ENCODE measurements at regions of chr1 and their contacts with region 1.

Region 1: GRCh38 chr1:45583264-45583665 is 576 bp upstream of the NASP start:
- DNase-seq: peak; percentile 89 to 98
- ATAC-seq: peak; percentile 79 to 91 (median 79)
- H3K4me3 ChIP-seq: peak overlapping the region; percentile 97
- H3K4me3 Mint-ChIP-seq: peak overlapping the region; percentile 99
- H3K27ac ChIP-seq: peak overlapping the region; percentile 91
- H3K27ac Mint-ChIP-seq: peak overlapping the region; percentile 92 to 99
- H3K4me1 ChIP-seq: peaks cover 27% of the 10 kb centered on the region
- H3K4me1 Mint-ChIP-seq: peaks cover 35 to 38% of the 10 kb centered on the region in 2 donors
- H3K27me3 ChIP-seq: no peaks in the 10 kb centered on the region
- H3K27me3 Mint-ChIP-seq: no peaks in the 10 kb centered on the region
- CTCF ChIP-seq: no peak

Region 2: GRCh38 chr1:45339789-45340570 is 243.3 kb before region 1 on chr1 and contains the starts of genes MUTYH and TOE1:
- intact Hi-C with region 1: loop called (anchors 5 kb)
- DNase-seq: peak; percentile 81 to 93
- ATAC-seq: peak; percentile 82 to 92 (median 85)
- H3K4me3 ChIP-seq: peak within 1 kb of the TSS; percentile 95
- H3K4me3 Mint-ChIP-seq: peak within 1 kb of the TSS; percentile 99
- H3K27ac ChIP-seq: peak within 1 kb of the TSS; percentile 99
- H3K27ac Mint-ChIP-seq: peak within 1 kb of the TSS; percentile 94 to 96
- H3K4me1 ChIP-seq: peaks cover 27% of the 10 kb centered on the region
- H3K4me1 Mint-ChIP-seq: peaks cover 48 to 49% of the 10 kb centered on the region in 2 donors
- H3K27me3 ChIP-seq: no peaks in the 10 kb centered on the region
- H3K27me3 Mint-ChIP-seq: no peaks in the 10 kb centered on the region
- CTCF ChIP-seq: no peak
- total RNA-seq, gene MUTYH: 44.0 to 55.6 (median 51.5) TPM
- total RNA-seq, gene TOE1: 23.2 to 36.8 (median 28.2) TPM

Region 3: DNA sequence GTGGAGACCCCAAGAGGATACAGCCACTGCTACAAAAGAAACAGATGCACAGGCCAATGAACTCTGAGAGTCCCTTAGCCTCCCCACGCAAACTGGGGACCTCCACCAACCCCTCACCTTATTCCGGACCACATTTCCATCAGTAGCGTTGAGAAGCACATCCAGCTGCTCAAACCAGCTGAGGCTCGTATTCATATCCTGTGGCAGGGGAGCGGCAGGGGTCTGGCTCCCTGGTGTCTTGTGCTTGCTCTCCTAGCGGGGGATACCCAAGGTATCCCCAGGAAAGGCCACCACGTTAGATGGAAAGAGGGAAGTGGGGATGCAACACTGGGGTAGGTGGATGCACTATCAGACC is 83.9 kb before region 1 on chr1:
- intact Hi-C with region 1: loop called (anchors 1 kb)
- DNase-seq: no peak
- ATAC-seq: no peak
- H3K4me3 ChIP-seq: peak overlapping the region; percentile 58
- H3K4me3 Mint-ChIP-seq: peak overlapping the region; percentile 94
- H3K27ac ChIP-seq: peak overlapping the region; percentile 46
- H3K27ac Mint-ChIP-seq: peak overlapping the region; percentile 83 to 90
- H3K4me1 ChIP-seq: peaks cover 17% of the 10 kb centered on the region
- H3K4me1 Mint-ChIP-seq: peaks cover 26 to 28% of the 10 kb centered on the region in 2 donors
- H3K27me3 ChIP-seq: no peaks in the 10 kb centered on the region
- H3K27me3 Mint-ChIP-seq: no peaks in the 10 kb centered on the region
- CTCF ChIP-seq: no peak

Region 4: GRCh38 chr1:45550401-45551351 is 32.6 kb before region 1 on chr1 and contains the start of gene AKR1A1:
- intact Hi-C with region 1: loop called (anchors 2 kb)
- DNase-seq: peak; percentile 84 to 94
- ATAC-seq: peak; percentile 93 to 97 (median 94)
- H3K4me3 ChIP-seq: peak within 1 kb of the TSS; percentile 71
- H3K4me3 Mint-ChIP-seq: peak within 1 kb of the TSS; percentile 96
- H3K27ac ChIP-seq: peak within 1 kb of the TSS; percentile 83
- H3K27ac Mint-ChIP-seq: peak within 1 kb of the TSS; percentile 91 to 94
- H3K4me1 ChIP-seq: peaks cover 14% of the 10 kb centered on the region
- H3K4me1 Mint-ChIP-seq: peaks cover 20 to 23% of the 10 kb centered on the region in 2 donors
- H3K27me3 ChIP-seq: no peaks in the 10 kb centered on the region
- H3K27me3 Mint-ChIP-seq: peaks cover 4 to 5% of the 10 kb centered on the region in 2 donors
- CTCF ChIP-seq: no peak
- total RNA-seq, gene AKR1A1: 45.7 to 54.2 (median 53.9) TPM

Measured in natural killer cell (primary cell).